Naive thymus-derived CD4-positive, alpha-beta T cell (primary cell): ENCODE measurements at regions of chr7 and their contacts with region 1.

Region 1: GRCh38 chr7:128387216-128388144 is 22.3 kb downstream of the IMPDH1 start:
- DNase-seq: peak; percentile 31 to 67 (median 48)
- ATAC-seq: peak; percentile 87
- H3K4me3 ChIP-seq: no peak overlapping the region
- H3K4me3 Mint-ChIP-seq: no peak overlapping the region
- H3K27ac ChIP-seq: no peak overlapping the region
- H3K27ac Mint-ChIP-seq: no peak overlapping the region
- H3K4me1 ChIP-seq: no peaks in the 10 kb centered on the region
- H3K4me1 Mint-ChIP-seq: peaks cover 0 to 6% (median 1%) of the 10 kb centered on the region in 7 donors
- H3K27me3 ChIP-seq: no peaks in the 10 kb centered on the region
- H3K27me3 Mint-ChIP-seq: peaks cover 0 to 4% (median 0%) of the 10 kb centered on the region in 5 donors

Region 2: GRCh38 chr7:127943541-127944521 is 443.6 kb before region 1 on chr7:
- CTCF ChIA-PET with region 1: no interaction called
- POLR2A ChIA-PET with region 1: no interaction called
- intact Hi-C with region 1: no loop called
- DNase-seq: no peak
- ATAC-seq: no peak
- H3K4me3 ChIP-seq: no peak overlapping the region
- H3K4me3 Mint-ChIP-seq: no peak overlapping the region
- H3K27ac ChIP-seq: no peak overlapping the region
- H3K27ac Mint-ChIP-seq: no peak overlapping the region
- H3K4me1 ChIP-seq: no peaks in the 10 kb centered on the region
- H3K4me1 Mint-ChIP-seq: peaks cover 0 to 7% (median 4%) of the 10 kb centered on the region in 7 donors
- H3K27me3 ChIP-seq: no peaks in the 10 kb centered on the region
- H3K27me3 Mint-ChIP-seq: no peaks in the 10 kb centered on the region

Region 3: DNA sequence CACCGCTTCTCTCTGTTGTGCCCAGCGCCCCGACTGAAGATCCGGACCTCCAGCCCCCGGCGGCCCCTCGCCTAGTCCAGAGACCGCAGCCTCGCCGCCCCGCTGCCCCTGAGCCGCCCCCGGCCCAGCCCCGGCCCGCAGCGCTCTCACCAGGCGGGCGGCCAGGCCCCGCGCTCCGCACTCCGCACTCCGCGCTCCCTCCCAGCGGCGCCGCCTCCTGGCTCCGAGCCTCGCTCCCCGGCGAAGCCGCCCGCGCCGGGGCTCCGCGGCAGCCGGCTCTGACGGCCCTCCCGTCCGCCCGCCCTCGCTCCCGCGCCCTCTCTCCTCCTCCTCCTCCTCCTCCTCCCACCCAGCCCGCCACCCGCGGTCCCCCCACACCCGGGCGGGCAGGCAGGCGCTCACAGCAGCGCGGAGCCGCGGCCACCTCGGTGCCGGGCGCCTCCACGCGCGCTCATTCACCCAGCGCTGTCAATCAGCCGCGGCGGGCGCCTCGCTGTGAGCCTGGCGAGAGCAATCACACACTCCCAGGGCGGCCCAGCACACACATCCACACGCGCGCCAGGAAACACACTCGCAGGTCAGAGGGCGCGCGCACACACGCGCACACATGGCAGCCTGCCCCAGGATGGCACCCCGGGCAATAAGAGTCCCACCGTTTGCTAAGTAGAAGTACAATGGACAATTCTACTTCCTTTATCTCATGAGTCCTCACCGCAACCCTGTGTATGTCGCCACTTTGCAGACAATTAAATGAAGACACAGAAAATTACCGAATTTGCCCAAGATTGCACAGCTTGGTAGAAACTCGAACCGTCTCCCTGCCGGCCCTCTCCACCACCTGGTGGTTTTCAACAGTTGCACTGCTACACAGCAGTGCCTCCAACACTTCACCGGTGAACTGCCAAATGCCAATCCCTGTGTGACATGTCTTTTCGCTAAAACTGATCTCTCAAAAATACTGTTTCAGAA is 25.8 kb before region 1 on chr7 and contains the start of gene PRRT4:
- CTCF ChIA-PET with region 1: interaction called, 4 read pairs
- POLR2A ChIA-PET with region 1: interaction called, 3 read pairs
- intact Hi-C with region 1: loop called in 1 of 2 experiments (anchors 2 kb)
- DNase-seq: peak in 8 of 9 donors; percentile 40 to 68 (median 58)
- ATAC-seq: peak; percentile 81
- H3K4me3 ChIP-seq: peak within 1 kb of the TSS; percentile 55
- H3K4me3 Mint-ChIP-seq: peak within 1 kb of the TSS; percentile 75 to 96 (median 88)
- H3K27ac ChIP-seq: no peak within 1 kb of the TSS
- H3K27ac Mint-ChIP-seq: peak within 1 kb of the TSS in 8 of 9 donors; percentile 22 to 89 (median 70)
- H3K4me1 ChIP-seq: peaks cover 0 to 5% of the 10 kb centered on the region in 2 donors
- H3K4me1 Mint-ChIP-seq: peaks cover 11 to 21% (median 15%) of the 10 kb centered on the region in 7 donors
- H3K27me3 ChIP-seq: no peaks in the 10 kb centered on the region
- H3K27me3 Mint-ChIP-seq: peaks cover 36 to 80% (median 39%) of the 10 kb centered on the region in 5 donors
- total RNA-seq, gene PRRT4: 0.49 to 1.1 (median 0.58) TPM in 4 of 5 experiments, not detected in the other